Heart right ventricle (tissue), 16 donors: ENCODE measurements at regions of chr3 and their contacts with region 1.

Region 1: GRCh38 chr3:43378066-43378935 is 92.0 kb downstream of the SNRK start:
- DNase-seq: no peak
- ATAC-seq: peak in 5 of 8 donors; percentile 25 to 48 (median 44)
- H3K4me3 ChIP-seq: no peak overlapping the region
- H3K27ac ChIP-seq: peak overlapping the region in 4 of 10 donors; percentile 2 to 47 (median 20)
- H3K4me1 ChIP-seq: peaks cover 0 to 26% (median 16%) of the 10 kb centered on the region in 9 donors
- H3K27me3 ChIP-seq: no peaks in the 10 kb centered on the region
- CTCF ChIP-seq: peak; percentile 21 to 69 (median 57)

Region 2: DNA sequence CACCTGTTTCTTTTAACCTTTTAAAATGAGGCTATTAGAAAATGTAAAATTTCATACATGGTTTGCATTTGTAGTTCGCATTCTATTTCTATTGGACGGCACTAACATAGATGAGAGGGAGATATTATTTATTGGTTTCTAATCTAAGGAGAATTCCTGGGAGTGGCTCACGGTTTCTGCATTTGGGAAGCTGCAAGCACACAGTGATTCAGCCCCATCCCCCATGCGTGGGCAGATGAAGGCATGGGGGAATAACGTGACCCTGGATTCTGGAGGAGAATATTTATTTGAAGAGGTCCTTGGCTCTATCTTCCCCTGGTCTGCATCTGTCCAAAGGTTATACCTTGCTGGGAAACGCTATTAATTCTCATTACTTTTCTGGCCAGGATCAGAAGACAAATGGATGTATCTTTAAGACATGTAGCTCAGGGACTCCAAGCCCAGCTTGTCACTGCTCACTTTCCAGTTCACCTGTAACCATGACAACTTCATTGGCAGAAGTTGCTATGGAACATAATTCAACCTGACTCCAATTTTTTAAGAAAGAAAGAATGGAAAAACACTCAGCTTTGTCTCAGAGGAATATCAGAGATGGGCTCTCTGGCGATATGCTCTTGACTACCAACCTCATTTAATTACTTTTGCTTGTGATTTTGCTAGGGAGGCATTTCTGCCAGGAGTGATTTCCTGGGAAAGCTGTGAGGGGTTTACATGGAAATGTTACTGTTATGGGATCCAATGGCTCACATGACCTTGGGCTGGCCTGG is 245.2 kb before region 1 on chr3:
- intact Hi-C with region 1: no loop called
- DNase-seq: no peak
- ATAC-seq: no peak
- H3K4me3 ChIP-seq: no peak overlapping the region
- H3K27ac ChIP-seq: no peak overlapping the region
- H3K4me1 ChIP-seq: no peaks in the 10 kb centered on the region
- H3K27me3 ChIP-seq: no peaks in the 10 kb centered on the region
- CTCF ChIP-seq: no peak

Region 3: GRCh38 chr3:43155464-43156121 is 222.7 kb before region 1 on chr3:
- intact Hi-C with region 1: loop called in 5 of 10 experiments (anchors 5 to 10 kb)
- DNase-seq: peak; percentile 48 to 57
- ATAC-seq: peak; percentile 56 to 83 (median 76)
- H3K4me3 ChIP-seq: no peak overlapping the region
- H3K27ac ChIP-seq: peak overlapping the region in 1 of 10 donors; percentile 41
- H3K4me1 ChIP-seq: peaks cover 0 to 22% (median 0%) of the 10 kb centered on the region in 9 donors
- H3K27me3 ChIP-seq: peaks cover 0 to 14% (median 2%) of the 10 kb centered on the region in 7 donors
- CTCF ChIP-seq: peak; percentile 25 to 69 (median 65)

Region 4: GRCh38 chr3:43426388-43426787 is 48.1 kb after region 1 on chr3:
- intact Hi-C with region 1: no loop called
- DNase-seq: peak; percentile 55 to 76
- ATAC-seq: peak; percentile 87 to 98 (median 92)
- H3K4me3 ChIP-seq: no peak overlapping the region
- H3K27ac ChIP-seq: peak overlapping the region; percentile 54 to 93 (median 81)
- H3K4me1 ChIP-seq: peaks cover 0 to 44% (median 26%) of the 10 kb centered on the region in 9 donors
- H3K27me3 ChIP-seq: no peaks in the 10 kb centered on the region
- CTCF ChIP-seq: peak in 2 of 9 donors; percentile 24 to 27